Left ventricle myocardium superior (tissue), 1 donor: ENCODE measurements at regions of chr2 and their contacts with region 1.

Region 1: GRCh38 chr2:64914735-64915509 is 74.3 kb upstream of the SLC1A4 start:
- DNase-seq: peak; percentile 58
- ATAC-seq: peak; percentile 61

Region 2: GRCh38 chr2:65045651-65046050 is 130.7 kb after region 1 on chr2:
- intact Hi-C with region 1: loop called (anchors 2 kb)
- DNase-seq: no peak
- ATAC-seq: no peak

Region 3: DNA sequence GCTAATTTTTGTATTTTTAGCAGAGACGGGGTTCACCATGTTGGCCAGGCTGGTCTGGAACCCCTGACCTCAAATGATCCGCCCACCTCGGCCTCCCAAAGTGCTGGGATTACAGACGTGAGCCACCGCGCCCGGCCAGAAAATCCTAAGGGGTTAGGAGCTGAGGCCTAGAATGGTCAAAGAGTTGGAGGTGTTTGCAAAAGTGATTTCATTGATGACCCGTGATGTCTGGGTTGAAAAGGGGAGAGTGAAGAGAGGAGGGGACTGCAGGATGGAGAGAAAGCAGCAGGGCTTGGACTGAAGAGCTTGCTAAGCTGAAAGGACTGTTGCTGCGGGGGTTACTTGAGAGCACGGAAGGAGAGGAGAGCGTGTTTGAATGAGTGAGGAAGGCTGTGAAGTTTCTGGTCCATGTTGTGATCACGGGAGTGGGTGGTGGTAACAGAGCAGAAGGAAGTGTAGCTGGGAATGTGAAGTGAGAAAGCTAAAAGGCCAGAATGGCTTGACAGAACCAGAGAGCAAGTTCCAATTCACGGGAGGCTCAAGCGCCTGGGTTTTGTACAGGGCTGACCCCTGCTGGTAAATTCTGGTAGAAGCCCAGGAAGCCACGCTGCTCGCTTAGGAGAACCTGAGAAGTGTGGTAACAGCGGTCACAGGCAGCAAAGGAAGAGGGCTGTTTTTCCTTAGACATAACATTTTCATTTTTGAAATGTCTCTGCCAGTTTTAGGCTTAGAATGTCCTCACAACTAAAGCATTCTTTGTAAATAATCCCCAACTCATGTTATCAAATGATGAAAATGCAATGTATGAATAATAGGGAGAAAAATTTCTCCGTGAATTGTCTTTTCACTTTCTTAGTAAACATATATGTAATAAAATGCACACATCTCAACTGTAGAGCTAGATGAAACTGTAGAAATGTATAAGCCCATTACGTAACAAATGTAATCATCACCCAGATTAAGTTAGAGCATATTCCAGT is 272.2 kb after region 1 on chr2:
- intact Hi-C with region 1: loop called (anchors 10 kb)
- DNase-seq: peak; percentile 73
- ATAC-seq: peak; percentile 98

Region 4: DNA sequence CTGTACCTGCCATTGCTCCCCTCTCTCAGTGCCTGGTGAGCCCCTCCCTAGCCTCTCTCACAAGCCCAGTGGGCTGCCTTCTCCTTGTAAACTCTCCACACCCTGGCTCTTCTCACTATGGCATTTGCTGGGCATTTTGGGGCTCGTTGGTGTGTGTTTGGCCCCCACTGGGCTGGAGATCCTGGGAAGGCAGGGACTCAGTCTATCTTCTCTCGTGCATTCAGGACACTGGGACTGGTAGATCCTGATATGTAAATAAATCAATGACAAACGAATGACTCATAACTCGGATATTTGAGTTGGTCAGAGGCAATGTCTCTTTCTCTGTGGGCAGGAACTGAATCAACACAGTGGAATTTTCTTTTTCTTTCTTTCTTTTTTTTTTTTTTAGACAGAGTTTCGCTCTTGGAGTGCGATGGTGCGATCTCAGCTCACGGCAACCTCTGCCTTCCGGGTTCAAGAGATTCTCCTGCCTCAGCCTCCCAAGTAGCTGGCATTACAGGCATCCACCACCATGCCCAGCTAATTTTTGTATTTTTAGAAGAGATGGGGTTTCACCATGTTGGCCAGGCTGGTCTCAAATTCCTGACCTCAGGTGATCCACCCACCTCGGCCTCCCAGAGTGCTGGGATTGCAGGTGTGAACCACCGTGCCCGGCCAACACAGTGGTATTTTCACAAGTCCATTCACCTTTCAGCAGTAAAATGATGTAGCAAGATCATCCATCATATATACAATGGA is 662.1 kb after region 1 on chr2:
- intact Hi-C with region 1: loop called (anchors 10 kb)
- DNase-seq: no peak
- ATAC-seq: no peak